Spleen (tissue), 13 donors: ENCODE measurements at regions of chr7 and their contacts with region 1.

Region 1: DNA sequence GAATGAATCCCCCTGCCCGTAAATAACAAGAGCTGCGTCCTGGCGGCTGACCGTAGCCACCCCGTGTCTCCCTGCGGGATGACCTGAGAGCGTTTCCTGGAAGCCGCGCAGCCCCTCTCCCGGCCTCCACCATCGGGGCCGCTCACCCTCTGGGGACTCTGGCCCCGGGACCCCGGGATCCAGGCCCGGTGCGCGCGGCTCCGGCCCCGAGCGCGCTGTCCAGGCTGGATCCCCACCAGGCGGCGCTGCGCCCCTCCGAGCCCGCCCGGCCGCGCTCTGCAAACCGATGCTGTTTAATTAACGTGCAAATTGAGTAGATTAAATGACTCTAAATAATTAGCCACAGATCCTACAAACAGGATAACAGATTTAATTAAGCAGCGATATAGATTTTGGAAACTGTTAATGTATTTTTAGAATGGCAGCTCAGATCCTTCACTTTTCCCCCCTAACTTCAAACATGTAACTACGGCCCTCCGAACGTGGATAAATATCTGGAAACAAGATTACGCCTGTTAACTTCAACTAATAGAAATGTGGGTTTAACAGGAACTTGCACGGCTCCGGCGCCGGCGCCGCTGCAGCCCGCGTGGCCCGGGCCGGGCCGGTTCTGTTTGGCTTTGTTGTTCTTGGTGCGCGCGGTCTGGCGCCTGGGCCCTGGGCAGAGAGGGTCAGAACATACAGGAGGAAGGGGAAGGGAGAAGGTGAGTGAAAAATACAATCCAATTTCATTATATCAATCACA is 7.1 kb upstream of the UNCX start:
- DNase-seq: no peak
- H3K4me3 ChIP-seq: no peak overlapping the region
- H3K27ac ChIP-seq: no peak overlapping the region
- H3K4me1 ChIP-seq: peaks cover 0 to 27% (median 6%) of the 10 kb centered on the region in 6 donors
- H3K27me3 ChIP-seq: peaks cover 31 to 100% (median 95%) of the 10 kb centered on the region in 7 donors
- CTCF ChIP-seq: peak in 9 of 11 experiments; percentile 39 to 84 (median 72)
- POLR2A ChIP-seq: no peak

Region 2: DNA sequence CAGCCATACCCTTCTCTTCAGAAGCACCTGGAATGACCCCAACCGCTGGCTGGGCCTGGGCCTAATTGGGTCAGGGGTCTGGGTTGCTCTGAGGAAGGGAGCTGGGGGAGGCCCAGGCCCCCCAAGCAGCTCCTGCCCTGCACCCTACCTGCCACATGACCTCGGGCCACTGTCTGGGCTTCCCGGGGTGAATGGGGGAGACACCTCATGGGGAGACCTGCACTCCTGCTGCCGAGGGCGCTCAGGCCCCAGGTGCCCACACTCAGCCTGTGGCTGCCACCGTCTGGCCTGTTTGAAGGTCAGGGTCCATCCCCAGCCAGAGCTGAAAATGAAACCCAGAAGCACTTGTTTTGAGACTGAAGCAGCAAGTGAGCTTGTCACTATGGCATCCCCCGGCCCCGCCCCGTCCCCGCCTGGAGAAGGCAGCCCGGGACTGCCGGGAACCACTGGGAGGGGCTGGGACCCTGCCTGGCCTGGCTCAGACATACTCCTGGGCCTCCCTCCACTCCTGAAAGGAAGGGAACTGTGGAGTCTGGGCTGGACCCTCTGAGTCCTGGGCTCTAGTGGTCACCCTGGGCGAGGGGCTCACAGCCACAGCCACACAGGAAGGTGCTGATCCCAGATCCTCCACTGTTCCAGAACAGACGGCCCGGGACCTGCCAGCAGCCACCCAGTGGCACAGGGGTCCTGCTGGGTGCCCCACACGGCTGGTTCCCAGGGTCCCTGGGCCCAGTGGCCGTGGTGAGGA is 241.1 kb after region 1 on chr7:
- intact Hi-C with region 1: loop called (anchors 10 kb)
- DNase-seq: peak; percentile 88
- H3K4me3 ChIP-seq: no peak overlapping the region
- H3K27ac ChIP-seq: peak overlapping the region in 7 of 8 donors; percentile 64 to 79 (median 72)
- H3K4me1 ChIP-seq: peaks cover 7 to 36% (median 21%) of the 10 kb centered on the region in 6 donors
- H3K27me3 ChIP-seq: no peaks in the 10 kb centered on the region
- CTCF ChIP-seq: peak in 3 of 11 experiments; percentile 3 to 10 (median 9)
- POLR2A ChIP-seq: no peak